GM10248 (cell line): ENCODE measurements at regions of chr4 and their contacts with region 1.

Region 1: DNA sequence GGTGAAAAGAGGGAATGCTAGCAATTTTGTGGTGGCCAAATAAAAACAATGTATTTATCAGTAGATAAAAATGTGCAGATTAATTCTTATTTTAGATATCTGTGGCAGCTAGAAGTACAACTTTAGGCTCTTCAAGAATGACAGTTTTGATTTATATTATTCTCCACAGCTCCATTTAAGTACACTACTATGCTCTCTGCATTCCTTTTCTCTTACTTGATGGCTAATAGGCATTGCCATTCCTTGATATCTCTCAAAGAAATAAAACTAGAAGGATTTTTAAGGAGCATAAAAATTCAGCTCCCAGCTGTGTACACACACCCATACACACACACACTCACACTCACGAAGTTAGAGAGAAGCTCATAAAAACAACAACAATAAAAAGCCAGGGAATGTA is 59.4 kb upstream of the H2AZ1 start:
- DNase-seq: no peak
- CTCF ChIP-seq: no peak

Region 2: GRCh38 chr4:99991741-99992140 is 17.7 kb before region 1 on chr4:
- CTCF ChIA-PET with region 1: interaction called, 10 read pairs
- POLR2A ChIA-PET with region 1: no interaction called
- DNase-seq: no peak
- CTCF ChIP-seq: no peak

Region 3: DNA sequence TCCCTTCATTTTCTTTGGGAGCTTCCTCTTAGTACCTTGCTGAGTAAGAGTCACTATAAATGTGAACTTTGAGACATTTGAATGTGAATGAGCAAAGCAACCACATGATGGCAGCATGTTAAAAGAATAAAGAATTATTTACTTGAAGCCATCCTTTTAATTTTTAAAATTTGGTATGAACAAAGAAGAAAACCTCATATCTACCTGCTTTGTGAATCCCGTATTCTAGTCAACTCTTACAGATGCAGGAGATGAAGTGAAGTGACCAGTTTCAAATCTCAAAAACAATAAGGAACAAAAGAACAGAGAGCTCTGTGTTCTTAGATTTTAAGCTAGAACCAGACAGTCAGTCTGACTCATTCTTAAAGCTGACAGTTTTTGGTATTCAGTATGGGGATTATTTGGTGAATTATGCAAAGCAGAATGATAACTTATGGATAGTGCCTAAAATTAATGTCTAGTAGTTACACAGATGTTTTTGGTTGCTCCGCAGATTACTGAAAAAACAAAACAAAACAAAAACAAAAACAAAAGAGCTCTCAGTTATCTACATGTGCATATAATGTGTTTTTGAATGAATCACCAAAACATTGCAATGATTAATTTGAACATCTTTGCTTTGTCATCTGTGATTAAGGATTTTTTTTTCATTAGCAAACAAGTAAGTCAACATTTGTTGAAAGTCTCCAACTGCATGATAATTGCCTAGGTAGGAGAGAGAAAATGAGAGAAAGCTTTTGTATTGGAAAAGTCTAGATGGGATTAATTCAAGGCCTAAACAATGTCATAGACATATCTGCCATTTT is 11.2 kb before region 1 on chr4:
- CTCF ChIA-PET with region 1: interaction called, 11 read pairs
- POLR2A ChIA-PET with region 1: no interaction called
- DNase-seq: peak; percentile 18
- CTCF ChIP-seq: peak; percentile 39

Region 4: DNA sequence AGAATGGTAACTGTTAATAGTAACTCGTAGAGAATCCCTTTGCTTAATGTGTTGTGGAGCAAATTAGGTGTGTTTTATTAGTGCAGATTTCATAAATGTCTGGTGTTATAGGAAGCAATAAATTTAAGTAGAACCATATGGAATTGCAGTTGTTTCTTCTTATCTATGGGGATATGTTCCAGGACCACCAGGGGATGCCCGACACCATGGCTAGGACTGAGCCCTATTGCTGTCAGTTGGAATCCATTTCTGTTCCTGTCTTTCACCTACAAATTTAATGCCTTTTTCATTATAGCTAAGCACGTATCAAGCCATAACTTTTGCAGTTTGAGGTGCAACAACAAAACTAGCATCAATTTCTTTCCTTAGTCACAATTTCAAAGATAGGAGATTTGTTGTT is 108.3 kb after region 1 on chr4:
- CTCF ChIA-PET with region 1: no interaction called
- POLR2A ChIA-PET with region 1: no interaction called
- DNase-seq: no peak
- CTCF ChIP-seq: no peak